CD4-positive, alpha-beta T cell (primary cell): ENCODE measurements at regions of chr4 and their contacts with region 1.

Region 1: DNA sequence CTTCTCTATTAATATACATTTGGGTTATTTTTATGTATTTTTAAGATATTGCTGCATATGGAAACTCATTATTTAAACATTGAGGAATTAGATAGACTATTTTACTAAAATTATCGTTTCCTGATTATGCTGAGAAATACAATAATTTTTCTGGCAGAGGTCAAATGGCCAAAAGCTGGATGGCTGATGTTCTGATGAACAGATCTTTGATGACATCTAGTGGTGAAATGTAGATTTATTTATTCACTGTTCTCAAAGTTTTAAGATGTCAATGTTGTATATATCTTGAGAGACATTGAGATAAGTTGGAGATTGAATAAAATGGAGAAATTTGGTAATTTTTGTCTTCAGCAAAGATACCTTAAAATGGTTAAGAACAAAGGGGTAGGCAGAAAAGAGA is 96.2 kb downstream of the UGT8 start:
- DNase-seq: peak in 3 of 14 experiments; percentile 25 to 40 (median 29)
- ATAC-seq: no peak
- H3K4me3 ChIP-seq: no peak overlapping the region
- H3K4me3 Mint-ChIP-seq: no peak overlapping the region
- H3K27ac ChIP-seq: no peak overlapping the region
- H3K27ac Mint-ChIP-seq: no peak overlapping the region
- H3K4me1 ChIP-seq: no peaks in the 10 kb centered on the region
- H3K4me1 Mint-ChIP-seq: no peaks in the 10 kb centered on the region
- H3K27me3 ChIP-seq: no peaks in the 10 kb centered on the region
- H3K27me3 Mint-ChIP-seq: peaks cover 7% of the 10 kb centered on the region
- CTCF ChIP-seq: peak; percentile 73

Region 2: DNA sequence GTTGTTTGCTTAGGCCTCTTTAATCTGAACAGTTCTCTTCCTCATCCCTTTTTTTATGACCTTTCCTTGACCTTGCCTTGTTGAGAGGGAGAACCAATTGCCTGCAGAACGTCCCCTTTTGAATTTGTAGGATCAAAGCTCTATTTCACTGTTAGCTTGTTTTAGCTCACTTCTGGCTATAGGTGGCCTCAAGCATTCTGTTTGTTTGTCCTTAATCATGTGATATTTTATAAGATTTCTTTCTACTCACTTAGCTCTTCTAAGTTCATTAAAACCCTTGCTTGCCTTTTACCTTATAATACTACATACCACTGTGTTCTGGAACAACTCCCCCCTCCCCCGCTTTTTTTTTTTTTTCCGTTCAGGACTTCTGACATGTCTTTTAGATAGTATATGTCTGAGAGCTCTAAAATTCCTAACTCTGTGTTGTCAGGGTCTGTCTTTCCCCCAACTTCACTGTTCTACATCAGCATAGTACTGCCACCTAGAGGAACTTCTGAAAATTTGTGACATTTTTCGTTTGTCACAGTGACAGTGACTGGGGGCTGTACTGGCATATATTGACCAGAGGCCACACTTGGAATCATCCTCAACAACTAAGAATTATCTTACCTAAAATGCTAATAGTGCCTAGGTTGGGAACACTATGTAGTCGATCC is 1929.3 kb before region 1 on chr4:
- CTCF ChIA-PET with region 1: no interaction called
- POLR2A ChIA-PET with region 1: no interaction called
- intact Hi-C with region 1: loop called in 1 of 2 experiments (anchors 10 kb)
- DNase-seq: peak in 3 of 14 experiments; percentile 3 to 22 (median 11)
- ATAC-seq: no peak
- H3K4me3 ChIP-seq: no peak overlapping the region
- H3K4me3 Mint-ChIP-seq: no peak overlapping the region
- H3K27ac ChIP-seq: no peak overlapping the region
- H3K27ac Mint-ChIP-seq: no peak overlapping the region
- H3K4me1 ChIP-seq: no peaks in the 10 kb centered on the region
- H3K4me1 Mint-ChIP-seq: no peaks in the 10 kb centered on the region
- H3K27me3 ChIP-seq: no peaks in the 10 kb centered on the region
- H3K27me3 Mint-ChIP-seq: peaks cover 14% of the 10 kb centered on the region
- CTCF ChIP-seq: peak; percentile 29

Region 3: DNA sequence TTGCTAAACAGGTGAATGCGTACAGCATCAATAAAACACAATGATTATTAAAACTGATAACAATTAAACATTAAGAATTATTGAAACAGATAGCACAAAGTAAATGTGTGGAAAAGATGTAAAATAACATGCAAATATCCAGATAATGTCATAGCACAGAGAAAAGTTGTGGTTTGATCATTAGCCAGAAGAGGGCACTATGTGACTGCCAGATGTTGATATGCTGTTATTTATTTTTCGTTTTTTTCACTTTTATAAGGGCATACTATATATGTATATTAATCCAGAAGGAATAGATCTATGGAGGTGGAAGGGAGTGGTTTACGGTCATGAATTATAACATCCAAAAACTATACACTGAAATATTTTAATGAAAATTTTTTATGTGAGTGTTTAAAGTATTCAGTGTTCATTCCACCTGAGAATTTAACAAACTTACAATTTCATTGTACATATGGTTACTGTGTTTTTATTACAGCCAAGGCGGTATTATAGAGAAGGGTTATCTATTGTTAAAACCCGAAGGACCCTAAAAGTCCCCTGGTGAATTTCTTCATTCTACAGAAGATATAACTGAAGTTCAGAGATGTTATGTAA is 308.0 kb before region 1 on chr4:
- CTCF ChIA-PET with region 1: no interaction called
- POLR2A ChIA-PET with region 1: no interaction called
- intact Hi-C with region 1: loop called in 1 of 2 experiments (anchors 10 kb)
- DNase-seq: peak in 3 of 14 experiments; percentile 30 to 36 (median 34)
- ATAC-seq: no peak
- H3K4me3 ChIP-seq: no peak overlapping the region
- H3K4me3 Mint-ChIP-seq: no peak overlapping the region
- H3K27ac ChIP-seq: no peak overlapping the region
- H3K27ac Mint-ChIP-seq: no peak overlapping the region
- H3K4me1 ChIP-seq: no peaks in the 10 kb centered on the region
- H3K4me1 Mint-ChIP-seq: no peaks in the 10 kb centered on the region
- H3K27me3 ChIP-seq: no peaks in the 10 kb centered on the region
- H3K27me3 Mint-ChIP-seq: peaks cover 30% of the 10 kb centered on the region
- CTCF ChIP-seq: peak; percentile 52

Region 4: GRCh38 chr4:114417214-114417613 is 277.6 kb before region 1 on chr4:
- CTCF ChIA-PET with region 1: no interaction called
- POLR2A ChIA-PET with region 1: no interaction called
- intact Hi-C with region 1: no loop called
- DNase-seq: no peak
- ATAC-seq: no peak
- H3K4me3 ChIP-seq: no peak overlapping the region
- H3K4me3 Mint-ChIP-seq: no peak overlapping the region
- H3K27ac ChIP-seq: no peak overlapping the region
- H3K27ac Mint-ChIP-seq: no peak overlapping the region
- H3K4me1 ChIP-seq: no peaks in the 10 kb centered on the region
- H3K4me1 Mint-ChIP-seq: no peaks in the 10 kb centered on the region
- H3K27me3 ChIP-seq: peaks cover 0 to 9% of the 10 kb centered on the region in 2 experiments
- H3K27me3 Mint-ChIP-seq: peaks cover 4% of the 10 kb centered on the region
- CTCF ChIP-seq: no peak

Region 5: GRCh38 chr4:114758066-114758465 is 63.3 kb after region 1 on chr4:
- CTCF ChIA-PET with region 1: no interaction called
- POLR2A ChIA-PET with region 1: no interaction called
- intact Hi-C with region 1: no loop called
- DNase-seq: no peak
- ATAC-seq: no peak
- H3K4me3 ChIP-seq: no peak overlapping the region
- H3K4me3 Mint-ChIP-seq: no peak overlapping the region
- H3K27ac ChIP-seq: no peak overlapping the region
- H3K27ac Mint-ChIP-seq: no peak overlapping the region
- H3K4me1 ChIP-seq: no peaks in the 10 kb centered on the region
- H3K4me1 Mint-ChIP-seq: no peaks in the 10 kb centered on the region
- H3K27me3 ChIP-seq: no peaks in the 10 kb centered on the region
- H3K27me3 Mint-ChIP-seq: no peaks in the 10 kb centered on the region
- CTCF ChIP-seq: no peak

Region 6: GRCh38 chr4:114890773-114891172 is 196.0 kb after region 1 on chr4:
- CTCF ChIA-PET with region 1: no interaction called
- POLR2A ChIA-PET with region 1: no interaction called
- intact Hi-C with region 1: no loop called
- DNase-seq: no peak
- ATAC-seq: no peak
- H3K4me3 ChIP-seq: no peak overlapping the region
- H3K4me3 Mint-ChIP-seq: no peak overlapping the region
- H3K27ac ChIP-seq: no peak overlapping the region
- H3K27ac Mint-ChIP-seq: no peak overlapping the region
- H3K4me1 ChIP-seq: no peaks in the 10 kb centered on the region
- H3K4me1 Mint-ChIP-seq: no peaks in the 10 kb centered on the region
- H3K27me3 ChIP-seq: no peaks in the 10 kb centered on the region
- H3K27me3 Mint-ChIP-seq: no peaks in the 10 kb centered on the region
- CTCF ChIP-seq: no peak